Prostate gland (tissue), 2 donors: ENCODE measurements at regions of chr14 and their contacts with region 1.

Region 1: DNA sequence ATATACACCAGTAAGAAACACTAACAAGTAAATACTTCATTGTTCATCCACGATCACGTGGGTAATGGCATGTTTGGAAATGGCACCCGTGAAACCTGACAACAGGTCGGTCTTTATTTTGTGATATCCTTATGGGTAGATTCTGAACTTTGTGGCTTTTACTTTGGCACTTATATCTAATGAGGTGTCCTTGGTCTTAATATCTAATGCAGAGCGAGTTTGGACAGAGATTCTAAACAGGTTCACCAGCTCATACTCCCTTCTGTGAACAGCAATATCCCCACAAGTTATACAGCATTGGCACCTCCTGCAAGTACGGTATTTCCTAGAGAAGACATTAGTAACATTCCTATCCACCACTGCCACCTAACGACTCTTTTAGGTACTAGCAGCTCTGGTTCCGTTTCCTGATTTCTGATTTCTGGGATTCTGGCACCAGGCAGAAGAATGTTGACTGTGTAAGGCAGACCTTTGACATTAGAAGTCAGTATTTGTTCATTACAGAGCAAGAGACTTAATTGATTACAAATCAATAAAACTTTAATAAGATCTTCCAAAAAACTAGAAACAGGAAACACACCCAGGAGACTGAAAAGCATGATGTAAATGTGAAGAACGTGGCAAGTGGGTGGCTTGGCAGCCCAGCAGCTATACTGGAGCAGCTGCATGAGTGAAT is 2.4 kb downstream of the ANG start:
- DNase-seq: peak; percentile 63
- H3K4me3 ChIP-seq: no peak overlapping the region
- H3K27ac ChIP-seq: peak overlapping the region in 1 of 2 donors; percentile 23
- H3K4me1 ChIP-seq: no peaks in the 10 kb centered on the region
- H3K27me3 ChIP-seq: no peaks in the 10 kb centered on the region
- CTCF ChIP-seq: peak; percentile 52 to 89 (median 82)
- POLR2A ChIP-seq: no peak

Region 2: DNA sequence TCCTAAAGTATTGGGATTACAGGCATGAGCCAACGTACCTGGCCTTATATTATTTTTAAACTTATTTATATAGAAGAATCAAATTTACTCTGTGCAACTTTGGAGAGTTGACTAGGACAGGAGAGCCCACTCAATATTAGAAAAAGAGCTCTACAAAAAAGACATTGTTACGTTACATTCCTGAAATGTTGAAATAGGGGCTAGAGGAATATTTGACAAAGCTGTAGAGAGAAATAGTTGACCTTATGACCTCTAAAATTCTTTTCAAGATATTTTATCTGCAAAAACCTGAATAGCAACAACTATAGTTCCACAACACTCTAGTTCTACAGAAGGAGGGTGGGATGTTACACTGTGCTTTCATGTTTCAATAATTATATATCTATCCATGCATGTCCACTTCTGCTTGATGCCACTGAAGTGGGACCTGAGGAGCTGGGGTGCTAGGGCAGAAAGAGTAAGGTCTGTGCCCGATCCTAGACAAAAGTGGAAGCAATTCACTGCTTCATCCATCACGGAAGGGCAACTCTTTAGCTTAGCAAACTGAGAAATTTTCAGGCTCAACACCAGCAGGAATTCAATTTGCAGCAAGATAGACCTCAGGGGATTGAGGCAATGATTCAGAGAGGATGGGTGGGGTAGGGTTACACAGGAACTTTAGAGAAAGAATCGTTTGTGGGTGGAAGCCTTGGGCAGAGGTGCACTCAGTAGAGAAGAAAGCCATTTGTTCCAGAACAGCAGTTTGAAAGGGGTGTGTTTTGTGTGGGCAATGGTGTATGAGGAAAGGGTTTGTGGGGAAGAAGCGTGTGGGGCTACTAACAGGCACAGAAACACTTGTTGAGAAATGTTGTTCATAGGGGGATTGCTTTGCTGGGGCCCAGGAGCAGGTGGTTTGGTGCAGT is 201.6 kb before region 1 on chr14:
- intact Hi-C with region 1: no loop called
- DNase-seq: no peak
- H3K4me3 ChIP-seq: no peak overlapping the region
- H3K27ac ChIP-seq: no peak overlapping the region
- H3K4me1 ChIP-seq: no peaks in the 10 kb centered on the region
- H3K27me3 ChIP-seq: no peaks in the 10 kb centered on the region
- CTCF ChIP-seq: no peak
- POLR2A ChIP-seq: no peak

Region 3: GRCh38 chr14:20530771-20531571 is 160.0 kb before region 1 on chr14:
- intact Hi-C with region 1: loop called (anchors 10 kb)
- DNase-seq: peak; percentile 71
- H3K4me3 ChIP-seq: no peak overlapping the region
- H3K27ac ChIP-seq: no peak overlapping the region
- H3K4me1 ChIP-seq: no peaks in the 10 kb centered on the region
- H3K27me3 ChIP-seq: no peaks in the 10 kb centered on the region
- CTCF ChIP-seq: peak; percentile 31 to 74 (median 53)
- POLR2A ChIP-seq: no peak

Region 4: GRCh38 chr14:21063479-21063878 is 372.5 kb after region 1 on chr14:
- intact Hi-C with region 1: no loop called
- DNase-seq: no peak
- H3K4me3 ChIP-seq: no peak overlapping the region
- H3K27ac ChIP-seq: no peak overlapping the region
- H3K4me1 ChIP-seq: no peaks in the 10 kb centered on the region
- H3K27me3 ChIP-seq: no peaks in the 10 kb centered on the region
- CTCF ChIP-seq: no peak
- POLR2A ChIP-seq: no peak